Caco-2 (cell line): ENCODE measurements at regions of chr6 and their contacts with region 1.

Region 1: GRCh38 chr6:111642463-111643158 is 36.9 kb upstream of the TRAF3IP2 start:
- DNase-seq: peak in 1 of 2 experiments; percentile 55
- H3K4me3 ChIP-seq: no peak overlapping the region
- H3K4me3 Mint-ChIP-seq: no peak overlapping the region
- H3K27ac Mint-ChIP-seq: no peak overlapping the region
- H3K4me1 ChIP-seq: no peaks in the 10 kb centered on the region
- H3K4me1 Mint-ChIP-seq: no peaks in the 10 kb centered on the region
- H3K27me3 ChIP-seq: no peaks in the 10 kb centered on the region
- H3K27me3 Mint-ChIP-seq: no peaks in the 10 kb centered on the region
- CTCF ChIP-seq: peak in 1 of 2 experiments; percentile 44

Region 2: GRCh38 chr6:111361648-111362047 is 281.0 kb before region 1 on chr6:
- CTCF ChIA-PET with region 1: no interaction called
- POLR2A ChIA-PET with region 1: no interaction called
- intact Hi-C with region 1: loop called (anchors 1 kb)
- DNase-seq: peak; percentile 48 to 57
- H3K4me3 ChIP-seq: no peak overlapping the region
- H3K4me3 Mint-ChIP-seq: no peak overlapping the region
- H3K27ac Mint-ChIP-seq: no peak overlapping the region
- H3K4me1 ChIP-seq: no peaks in the 10 kb centered on the region
- H3K4me1 Mint-ChIP-seq: no peaks in the 10 kb centered on the region
- H3K27me3 ChIP-seq: no peaks in the 10 kb centered on the region
- H3K27me3 Mint-ChIP-seq: no peaks in the 10 kb centered on the region
- CTCF ChIP-seq: peak; percentile 50 to 54

Region 3: DNA sequence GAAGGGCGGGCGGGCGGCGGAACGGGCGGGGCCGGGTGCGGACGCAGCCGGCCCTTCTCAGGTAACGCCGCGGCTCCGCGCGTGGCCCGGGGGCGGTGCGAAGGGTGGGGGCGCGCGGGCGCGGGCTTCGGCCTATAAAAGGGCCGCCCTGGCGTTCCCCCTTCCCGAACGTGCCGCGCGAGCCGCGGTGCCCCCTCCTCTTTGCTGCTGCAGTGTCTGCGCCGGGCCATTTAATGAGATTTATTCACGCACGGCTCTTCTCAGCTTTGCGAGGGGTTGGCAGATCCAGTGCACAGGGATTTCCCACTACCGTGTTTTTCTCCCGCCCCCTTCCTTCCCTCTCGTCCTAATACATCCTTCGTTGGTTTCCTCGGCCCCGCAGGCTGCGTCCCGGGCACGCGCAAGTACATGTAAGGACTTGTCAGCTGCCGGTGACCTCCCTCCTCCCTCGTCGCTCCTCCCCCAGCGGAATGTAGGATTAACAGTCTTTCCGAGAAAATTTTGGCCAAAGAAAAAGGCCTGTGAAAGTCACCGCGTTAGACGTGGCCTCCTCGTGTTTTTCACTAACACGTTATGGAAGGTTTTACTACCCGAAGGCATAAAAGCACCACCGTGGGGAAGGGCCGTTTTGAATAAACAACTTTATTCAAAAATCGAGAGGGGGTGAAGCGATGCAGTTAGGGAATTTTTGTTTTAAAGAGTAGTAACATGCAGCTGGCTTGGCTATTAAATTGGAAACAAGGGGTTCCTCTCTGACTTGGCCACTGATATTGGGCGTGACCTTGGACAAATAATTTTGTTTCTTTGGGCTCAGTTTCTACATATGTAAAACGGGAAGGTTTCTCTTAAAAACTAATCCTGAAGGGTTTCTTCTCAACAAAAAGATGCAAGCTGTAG is 158.6 kb before region 1 on chr6:
- CTCF ChIA-PET with region 1: interaction called, 4 read pairs
- POLR2A ChIA-PET with region 1: no interaction called
- intact Hi-C with region 1: loop called (anchors 1 kb)
- DNase-seq: peak; percentile 93 to 94
- H3K4me3 ChIP-seq: peak overlapping the region; percentile 61
- H3K4me3 Mint-ChIP-seq: peak overlapping the region; percentile 96
- H3K27ac Mint-ChIP-seq: peak overlapping the region; percentile 98
- H3K4me1 ChIP-seq: peaks cover 7% of the 10 kb centered on the region; the same call in 1 of the 2 replicates
- H3K4me1 Mint-ChIP-seq: peaks cover 14% of the 10 kb centered on the region
- H3K27me3 ChIP-seq: no peaks in the 10 kb centered on the region
- H3K27me3 Mint-ChIP-seq: no peaks in the 10 kb centered on the region
- CTCF ChIP-seq: no peak